ENCODE measurements at regions of chr3 and their contacts with region 1.

Region 1: GRCh38 chr3:186826976-186827731 is 15.4 kb upstream of the ADIPOQ start:
- DNase-seq: peak; percentile 97
- H3K4me3 Mint-ChIP-seq: peak overlapping the region; percentile 98
- H3K27ac Mint-ChIP-seq: peak overlapping the region; percentile 90
- H3K4me1 Mint-ChIP-seq: peaks cover 22% of the 10 kb centered on the region
- H3K27me3 Mint-ChIP-seq: peaks cover 44% of the 10 kb centered on the region

Region 2: DNA sequence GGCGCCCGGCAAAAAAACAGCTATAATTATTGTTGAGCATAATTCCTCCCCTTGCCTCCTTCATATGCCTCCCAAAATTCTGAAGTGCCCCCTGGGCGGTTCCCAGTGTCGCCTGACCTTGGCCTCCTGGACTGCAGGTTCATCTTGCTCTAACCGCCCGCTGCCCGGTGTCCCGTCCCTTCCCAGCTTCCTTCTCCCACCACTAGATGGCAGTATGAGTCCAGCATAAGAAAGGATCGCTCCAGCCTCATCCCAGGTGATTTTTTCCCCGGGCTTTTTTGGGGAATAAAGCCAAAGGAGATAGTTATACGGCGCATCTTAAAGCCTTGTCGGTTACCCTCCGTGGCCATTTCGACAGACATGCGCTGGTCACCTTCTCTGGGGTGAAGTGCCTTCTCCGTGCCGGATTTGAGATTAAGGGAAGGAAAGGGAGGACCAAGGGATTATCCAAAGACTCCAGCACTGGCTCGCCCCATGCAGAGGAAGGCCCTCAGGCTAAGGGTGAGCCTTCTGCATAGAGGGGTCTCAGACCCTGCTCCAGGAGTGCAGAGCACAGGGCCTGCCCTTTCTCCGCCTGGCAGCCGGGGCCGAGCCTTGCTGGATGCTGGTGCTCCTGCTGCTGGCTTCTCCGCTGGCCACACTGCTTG is 843.5 kb before region 1 on chr3:
- intact Hi-C with region 1: loop called (anchors 10 kb)
- DNase-seq: peak; percentile 88
- H3K4me3 Mint-ChIP-seq: no peak overlapping the region
- H3K27ac Mint-ChIP-seq: no peak overlapping the region
- H3K4me1 Mint-ChIP-seq: peaks cover 4% of the 10 kb centered on the region
- H3K27me3 Mint-ChIP-seq: peaks cover 35% of the 10 kb centered on the region

Region 3: DNA sequence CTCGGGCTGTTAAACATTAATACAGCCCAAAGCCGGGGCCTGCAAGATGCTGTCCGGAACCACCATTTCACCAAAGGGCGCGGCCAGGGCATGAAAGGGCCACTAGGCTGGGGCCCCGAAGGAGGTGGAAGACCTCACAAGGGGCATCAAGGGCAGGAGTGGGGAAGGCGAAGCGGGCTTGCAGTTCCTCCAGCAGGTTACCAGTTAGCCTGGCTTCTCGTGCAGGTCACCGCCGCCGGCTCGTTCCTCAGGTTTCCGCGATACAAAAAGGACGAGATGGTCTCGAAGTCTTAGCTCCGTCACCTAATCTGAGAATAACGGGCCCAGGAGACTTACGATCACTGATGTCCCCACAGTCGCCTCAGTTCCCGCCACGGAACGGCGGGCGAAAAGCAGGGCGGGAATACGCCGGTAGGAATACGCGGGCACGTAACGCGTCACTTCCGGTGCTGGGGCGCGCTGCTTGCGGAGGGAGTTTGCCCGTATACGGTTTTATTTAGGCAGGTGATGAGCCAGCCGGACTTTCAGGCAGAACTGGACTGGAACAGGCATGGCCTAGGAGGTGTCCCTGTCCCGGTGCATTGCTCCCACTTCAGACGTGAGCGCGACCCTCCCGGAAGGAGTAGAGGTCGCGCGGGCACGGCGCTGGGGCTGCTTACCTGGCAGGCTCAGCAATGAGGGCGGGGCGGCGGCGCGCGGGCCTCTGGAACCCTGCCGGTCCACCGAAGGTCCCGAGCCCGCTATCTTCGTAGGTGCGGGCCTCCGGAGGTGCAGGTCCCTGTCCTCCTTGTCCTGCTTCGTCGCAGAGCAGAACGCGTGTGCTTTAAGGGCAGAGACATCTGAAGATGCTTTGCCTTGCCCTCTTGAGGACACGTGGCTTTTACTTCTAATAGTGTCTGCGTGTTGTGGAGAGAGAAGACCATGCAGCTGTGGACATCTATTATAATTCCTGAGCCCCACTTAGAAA is 20.8 kb before region 1 on chr3 and contains the start of gene RFC4:
- intact Hi-C with region 1: loop called (anchors 1 kb)
- DNase-seq: peak; percentile 96
- H3K4me3 Mint-ChIP-seq: peak within 1 kb of the TSS; percentile 93
- H3K27ac Mint-ChIP-seq: peak within 1 kb of the TSS; percentile 91
- H3K4me1 Mint-ChIP-seq: peaks cover 24% of the 10 kb centered on the region
- H3K27me3 Mint-ChIP-seq: no peaks in the 10 kb centered on the region
- total RNA-seq, gene RFC4: 116 and 119 TPM in 2 replicates

Region 4: GRCh38 chr3:187139126-187139894 is 312.2 kb after region 1 on chr3 and contains the start of gene RPL39L:
- intact Hi-C with region 1: loop called (anchors 2 kb)
- DNase-seq: peak; percentile 98
- H3K4me3 Mint-ChIP-seq: peak within 1 kb of the TSS; percentile 93
- H3K27ac Mint-ChIP-seq: peak within 1 kb of the TSS; percentile 98
- H3K4me1 Mint-ChIP-seq: peaks cover 27% of the 10 kb centered on the region
- H3K27me3 Mint-ChIP-seq: no peaks in the 10 kb centered on the region
- total RNA-seq, gene RPL39L: 10.4 and 11.7 TPM in 2 replicates